Mammary epithelial cell (primary cell): ENCODE measurements at regions of chr2 and their contacts with region 1.

Region 1: GRCh38 chr2:106582148-106583143 is 95.3 kb downstream of the CD8B2 start:
- DNase-seq: peak; percentile 53
- H3K4me3 ChIP-seq: peak overlapping the region; percentile 10 to 31 (median 31)
- H3K27ac ChIP-seq: no peak overlapping the region
- H3K4me1 ChIP-seq: peaks cover 6% of the 10 kb centered on the region
- H3K27me3 ChIP-seq: peaks cover 4% of the 10 kb centered on the region
- CTCF ChIP-seq: peak; percentile 80 to 96

Region 2: DNA sequence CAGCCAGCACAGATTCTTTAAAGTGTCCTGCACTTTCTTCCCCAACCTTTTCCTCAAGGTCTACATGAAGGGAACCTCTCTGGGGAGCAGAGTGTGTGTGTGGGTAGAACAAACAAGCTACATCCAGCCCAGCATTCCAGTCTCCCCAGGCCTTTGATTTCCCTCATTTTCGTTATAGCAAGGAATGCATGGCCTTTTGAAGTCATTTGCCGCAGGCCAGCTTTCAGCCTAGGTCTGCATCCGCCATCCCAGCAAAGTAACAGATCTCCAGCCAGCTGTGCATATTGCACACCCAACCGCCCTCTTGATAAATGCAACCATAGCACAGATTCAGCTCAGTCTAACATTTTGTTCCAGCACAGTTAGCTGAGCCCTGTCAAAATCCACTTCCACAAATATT is 50.7 kb before region 1 on chr2:
- CTCF ChIA-PET with region 1: no interaction called
- dilution Hi-C with region 1: no loop called
- in situ Hi-C with region 1: no loop called
- intact Hi-C with region 1: no loop called
- DNase-seq: no peak
- H3K4me3 ChIP-seq: no peak overlapping the region
- H3K27ac ChIP-seq: no peak overlapping the region
- H3K4me1 ChIP-seq: no peaks in the 10 kb centered on the region
- H3K27me3 ChIP-seq: no peaks in the 10 kb centered on the region
- CTCF ChIP-seq: no peak

Region 3: GRCh38 chr2:106542811-106543259 is 39.6 kb before region 1 on chr2:
- CTCF ChIA-PET with region 1: no interaction called
- dilution Hi-C with region 1: no loop called
- in situ Hi-C with region 1: no loop called
- intact Hi-C with region 1: loop called (anchors 2 kb)
- DNase-seq: peak; percentile 27
- H3K4me3 ChIP-seq: peak overlapping the region in 1 of 3 experiments; percentile 9
- H3K27ac ChIP-seq: no peak overlapping the region
- H3K4me1 ChIP-seq: no peaks in the 10 kb centered on the region
- H3K27me3 ChIP-seq: no peaks in the 10 kb centered on the region
- CTCF ChIP-seq: peak; percentile 80 to 95

Region 4: DNA sequence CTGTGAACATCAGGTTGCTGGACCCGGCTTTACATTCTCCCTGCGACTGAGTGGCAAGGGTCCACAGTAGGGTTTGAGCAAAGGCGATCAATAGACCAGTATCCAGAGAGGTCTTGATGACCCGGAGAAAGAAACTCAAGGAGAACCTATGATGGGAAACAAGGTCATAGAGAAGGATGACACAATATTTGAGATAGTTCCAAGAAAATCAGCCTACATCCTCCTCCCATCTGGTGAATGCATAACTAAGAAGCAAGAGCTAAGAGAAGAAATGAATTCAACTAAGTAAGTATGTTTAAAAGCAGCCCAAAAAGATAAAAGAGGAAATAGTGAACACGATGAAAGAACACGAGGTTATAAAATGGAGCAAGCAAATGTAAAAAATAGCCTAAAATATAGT is 71.0 kb after region 1 on chr2:
- CTCF ChIA-PET with region 1: no interaction called
- dilution Hi-C with region 1: no loop called
- in situ Hi-C with region 1: no loop called
- intact Hi-C with region 1: no loop called
- DNase-seq: no peak
- H3K4me3 ChIP-seq: no peak overlapping the region
- H3K27ac ChIP-seq: no peak overlapping the region
- H3K4me1 ChIP-seq: no peaks in the 10 kb centered on the region
- H3K27me3 ChIP-seq: peaks cover 2% of the 10 kb centered on the region
- CTCF ChIP-seq: no peak